Posterior vena cava (tissue), 2 donors: ENCODE measurements at regions of chr3 and their contacts with region 1.

Region 1: DNA sequence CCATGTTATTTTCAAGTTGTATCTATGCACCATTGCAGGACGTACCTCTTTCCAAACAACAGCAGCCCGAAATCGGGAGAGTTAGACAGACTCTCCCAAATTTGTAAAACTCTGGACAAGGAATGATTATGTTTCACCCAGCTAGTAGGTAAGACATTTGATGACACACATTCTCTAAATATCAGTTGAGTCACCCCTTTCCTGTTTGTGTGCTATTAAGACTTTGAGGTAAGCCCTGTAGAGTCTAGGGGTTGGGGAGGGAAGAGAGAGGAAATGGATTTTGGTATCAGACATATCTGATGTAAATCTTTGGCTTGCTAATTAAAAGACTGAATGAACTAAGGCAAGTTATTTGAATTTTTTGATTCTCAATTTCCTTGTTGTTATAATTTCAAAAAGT is 999.0 kb downstream of the TUSC7 start:
- DNase-seq: no peak

Region 2: DNA sequence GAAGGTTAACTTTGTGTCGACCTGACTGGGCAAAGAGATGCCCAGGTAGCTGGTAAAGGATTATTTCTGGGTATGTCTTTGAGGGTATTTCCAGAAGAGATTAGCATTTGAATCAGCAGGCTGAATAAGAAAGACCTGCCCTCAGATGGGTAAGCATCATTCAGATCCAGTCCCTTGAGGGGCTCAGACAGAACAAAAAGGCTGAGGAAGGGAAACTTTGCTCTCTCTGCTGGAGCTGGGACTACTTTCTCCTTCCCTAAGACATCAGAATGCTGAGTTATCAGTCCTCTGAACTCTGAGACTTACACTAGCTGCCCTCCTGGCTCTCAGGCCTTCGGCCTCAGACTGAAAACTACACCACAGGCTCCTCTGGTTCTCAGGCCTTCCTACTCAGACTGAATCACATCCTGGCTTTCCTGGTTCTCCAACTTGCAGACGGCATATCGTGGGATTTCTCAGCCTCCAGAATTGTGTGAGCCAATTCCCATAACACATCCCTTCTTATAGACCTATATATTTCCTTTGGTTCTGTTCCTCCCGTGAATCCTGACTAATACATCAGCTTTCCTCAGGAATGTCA is 16.1 kb before region 1 on chr3:
- intact Hi-C with region 1: loop called in 1 of 2 experiments (anchors 1 kb)
- DNase-seq: no peak

Region 3: GRCh38 chr3:117977504-117978228 is 269.1 kb after region 1 on chr3:
- intact Hi-C with region 1: no loop called
- DNase-seq: no peak